CD8-positive, alpha-beta T cell (primary cell): ENCODE measurements at regions of chr19 and their contacts with region 1.

Region 1: GRCh38 chr19:54023191-54023590 is 31.8 kb downstream of the CACNG6 start:
- DNase-seq: no peak
- ATAC-seq: no peak
- H3K4me3 ChIP-seq: no peak overlapping the region
- H3K4me3 Mint-ChIP-seq: no peak overlapping the region
- H3K27ac ChIP-seq: no peak overlapping the region
- H3K27ac Mint-ChIP-seq: no peak overlapping the region
- H3K4me1 ChIP-seq: no peaks in the 10 kb centered on the region
- H3K4me1 Mint-ChIP-seq: peaks cover 4% of the 10 kb centered on the region
- H3K27me3 ChIP-seq: peaks cover 0 to 6% of the 10 kb centered on the region in 2 experiments
- H3K27me3 Mint-ChIP-seq: peaks cover 37% of the 10 kb centered on the region
- CTCF ChIP-seq: no peak

Region 2: DNA sequence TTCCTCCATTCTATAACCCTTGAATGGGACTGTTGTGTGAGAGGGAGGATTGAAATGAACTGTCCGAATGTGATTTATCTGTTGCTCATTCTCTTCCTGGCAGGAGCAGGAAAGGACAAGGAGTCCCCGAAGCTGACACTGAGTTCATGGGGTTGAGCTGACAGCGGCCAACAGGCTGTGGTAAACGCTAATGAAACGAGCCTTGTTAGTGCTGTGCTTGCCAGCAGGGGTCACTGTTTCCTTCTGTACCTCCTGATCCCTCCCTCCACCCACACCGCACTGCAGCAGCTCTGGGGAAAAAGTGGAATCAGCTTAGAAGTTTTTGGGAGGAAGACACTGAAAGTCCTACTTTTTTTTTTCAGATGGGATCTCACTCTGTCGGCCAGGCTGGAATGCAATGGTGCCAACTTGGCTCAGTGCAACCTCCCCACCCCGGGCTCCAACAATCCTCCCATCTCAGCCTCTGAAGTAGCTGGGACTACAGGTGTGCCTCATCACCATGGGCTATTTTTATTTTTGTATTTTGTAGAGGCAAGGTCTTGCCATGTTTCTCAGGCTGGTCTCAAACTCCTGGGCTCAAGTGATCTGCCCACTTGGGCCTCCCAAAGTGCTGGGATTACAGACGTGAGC is 598.1 kb before region 1 on chr19:
- CTCF ChIA-PET with region 1: no interaction called
- POLR2A ChIA-PET with region 1: no interaction called
- intact Hi-C with region 1: loop called in 1 of 2 experiments (anchors 5 kb)
- DNase-seq: peak; percentile 22 to 83 (median 70)
- ATAC-seq: peak; percentile 98
- H3K4me3 ChIP-seq: no peak overlapping the region
- H3K4me3 Mint-ChIP-seq: no peak overlapping the region
- H3K27ac ChIP-seq: no peak overlapping the region
- H3K27ac Mint-ChIP-seq: no peak overlapping the region
- H3K4me1 ChIP-seq: no peaks in the 10 kb centered on the region
- H3K4me1 Mint-ChIP-seq: peaks cover 2% of the 10 kb centered on the region
- H3K27me3 ChIP-seq: no peaks in the 10 kb centered on the region
- H3K27me3 Mint-ChIP-seq: peaks cover 2% of the 10 kb centered on the region
- CTCF ChIP-seq: peak; percentile 81

Region 3: DNA sequence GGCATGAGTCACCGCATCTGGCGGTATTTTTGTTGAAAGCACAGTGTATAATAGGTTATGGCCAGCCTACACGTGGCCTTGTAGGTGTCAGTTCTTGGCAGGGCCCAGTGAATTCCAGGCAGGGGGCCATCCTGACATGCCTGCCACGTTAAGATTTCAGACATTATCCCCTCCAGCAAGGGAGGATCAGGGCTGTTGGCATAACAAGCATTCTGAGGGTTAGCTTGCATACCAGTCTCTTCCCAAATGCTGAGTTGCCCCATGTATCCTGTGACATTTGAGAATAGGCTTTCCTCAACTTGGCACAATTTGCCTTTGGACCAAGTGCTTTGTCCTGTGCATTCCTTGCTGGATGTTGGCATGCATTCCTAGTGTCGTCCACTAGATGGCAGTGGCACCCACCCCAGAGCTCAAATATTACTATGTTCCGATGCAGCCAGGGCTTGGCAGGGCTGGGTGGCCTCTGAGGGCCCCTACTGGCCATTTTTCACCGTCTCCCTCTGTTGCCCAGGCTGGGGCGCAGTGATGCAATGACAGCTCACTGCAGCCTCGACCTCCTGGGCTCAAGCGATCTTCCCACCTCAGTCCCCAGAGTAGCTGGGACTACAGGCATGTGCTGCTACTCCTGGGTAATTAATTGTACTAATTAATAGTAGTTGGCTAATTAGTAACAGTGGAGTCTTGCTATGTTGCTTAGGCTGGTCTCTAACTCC is 230.3 kb before region 1 on chr19:
- CTCF ChIA-PET with region 1: interaction called, 32 read pairs
- POLR2A ChIA-PET with region 1: no interaction called
- intact Hi-C with region 1: loop called (anchors 1 kb)
- DNase-seq: peak; percentile 46 to 81 (median 68)
- ATAC-seq: peak; percentile 100
- H3K4me3 ChIP-seq: no peak overlapping the region
- H3K4me3 Mint-ChIP-seq: no peak overlapping the region
- H3K27ac ChIP-seq: no peak overlapping the region
- H3K27ac Mint-ChIP-seq: no peak overlapping the region
- H3K4me1 ChIP-seq: no peaks in the 10 kb centered on the region
- H3K4me1 Mint-ChIP-seq: no peaks in the 10 kb centered on the region
- H3K27me3 ChIP-seq: no peaks in the 10 kb centered on the region
- H3K27me3 Mint-ChIP-seq: peaks cover 2% of the 10 kb centered on the region
- CTCF ChIP-seq: peak; percentile 91

Region 4: DNA sequence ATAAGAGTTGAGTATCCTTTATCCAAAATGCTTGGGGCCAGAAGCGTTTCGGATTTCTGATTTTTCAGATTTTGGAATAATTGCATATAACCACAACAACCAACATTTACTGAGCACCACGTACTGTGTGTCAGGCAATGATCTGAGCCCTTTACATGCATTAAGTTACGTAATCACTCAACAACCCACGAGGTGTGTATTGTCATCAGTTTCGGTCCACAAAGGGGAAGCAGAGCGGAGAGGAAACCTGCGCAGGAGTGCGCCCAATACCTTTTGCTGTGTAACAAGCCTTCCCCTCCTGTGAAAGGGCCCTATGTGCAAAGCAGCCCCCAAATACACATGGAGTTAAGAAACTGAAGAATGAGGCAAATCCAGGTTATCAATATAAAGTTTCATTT is 178.3 kb before region 1 on chr19:
- CTCF ChIA-PET with region 1: interaction called, 57 read pairs
- POLR2A ChIA-PET with region 1: no interaction called
- intact Hi-C with region 1: loop called (anchors 1 kb)
- DNase-seq: peak in 1 of 9 experiments; percentile 32
- ATAC-seq: no peak
- H3K4me3 ChIP-seq: no peak overlapping the region
- H3K4me3 Mint-ChIP-seq: no peak overlapping the region
- H3K27ac ChIP-seq: no peak overlapping the region
- H3K27ac Mint-ChIP-seq: no peak overlapping the region
- H3K4me1 ChIP-seq: no peaks in the 10 kb centered on the region
- H3K4me1 Mint-ChIP-seq: peaks cover 5% of the 10 kb centered on the region
- H3K27me3 ChIP-seq: peaks cover 0 to under 1% of the 10 kb centered on the region in 2 experiments
- H3K27me3 Mint-ChIP-seq: peaks cover 21% of the 10 kb centered on the region
- CTCF ChIP-seq: no peak

Region 5: GRCh38 chr19:53853707-53854106 is 169.5 kb before region 1 on chr19:
- CTCF ChIA-PET with region 1: interaction called, 39 read pairs
- POLR2A ChIA-PET with region 1: no interaction called
- intact Hi-C with region 1: no loop called
- DNase-seq: no peak
- ATAC-seq: no peak
- H3K4me3 ChIP-seq: no peak overlapping the region
- H3K4me3 Mint-ChIP-seq: no peak overlapping the region
- H3K27ac ChIP-seq: no peak overlapping the region
- H3K27ac Mint-ChIP-seq: no peak overlapping the region
- H3K4me1 ChIP-seq: no peaks in the 10 kb centered on the region
- H3K4me1 Mint-ChIP-seq: peaks cover 6% of the 10 kb centered on the region
- H3K27me3 ChIP-seq: peaks cover 0 to 3% of the 10 kb centered on the region in 2 experiments
- H3K27me3 Mint-ChIP-seq: peaks cover 22% of the 10 kb centered on the region
- CTCF ChIP-seq: no peak

Region 6: DNA sequence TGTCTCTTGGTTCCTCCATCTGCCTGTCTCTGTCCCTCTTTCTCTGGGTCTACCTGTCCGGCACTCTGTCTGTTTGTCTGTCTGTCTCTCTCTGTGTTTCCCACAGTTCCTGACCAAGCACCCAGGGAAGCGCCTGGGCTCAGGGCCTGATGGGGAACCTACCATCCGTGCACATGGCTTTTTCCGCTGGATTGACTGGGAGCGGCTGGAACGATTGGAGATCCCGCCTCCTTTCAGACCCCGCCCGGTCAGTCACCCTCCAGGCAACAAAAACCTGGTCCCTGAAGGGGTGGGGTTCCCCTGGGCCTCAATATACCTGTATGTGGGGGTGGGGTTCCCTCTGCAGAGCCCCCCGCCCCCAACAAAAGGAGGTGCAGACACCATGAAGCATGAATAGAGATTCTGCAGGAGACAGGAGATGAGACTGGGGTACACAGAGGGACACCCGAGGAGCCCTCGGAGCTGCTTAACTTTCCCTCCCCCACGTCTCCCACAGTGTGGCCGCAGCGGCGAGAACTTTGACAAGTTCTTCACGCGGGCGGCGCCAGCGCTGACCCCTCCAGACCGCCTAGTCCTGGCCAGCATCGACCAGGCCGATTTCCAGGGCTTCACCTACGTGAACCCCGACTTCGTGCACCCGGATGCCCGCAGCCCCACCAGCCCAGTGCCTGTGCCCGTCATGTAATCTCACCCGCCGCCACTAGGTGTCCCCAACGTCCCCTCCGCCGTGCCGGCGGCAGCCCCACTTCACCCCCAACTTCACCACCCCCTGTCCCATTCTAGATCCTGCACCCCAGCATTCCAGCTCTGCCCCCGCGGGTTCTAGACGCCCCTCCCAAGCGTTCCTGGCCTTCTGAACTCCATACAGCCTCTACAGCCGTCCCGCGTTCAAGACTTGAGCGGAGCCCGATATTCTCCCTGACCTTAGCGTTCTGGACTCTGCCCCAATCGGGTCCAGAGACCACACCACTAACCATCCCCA is 116.7 kb before region 1 on chr19:
- CTCF ChIA-PET with region 1: no interaction called
- POLR2A ChIA-PET with region 1: interaction called, 3 read pairs
- intact Hi-C with region 1: loop called in 1 of 2 experiments (anchors 2 kb)
- DNase-seq: peak; percentile 52 to 81 (median 73)
- ATAC-seq: peak; percentile 81
- H3K4me3 ChIP-seq: no peak overlapping the region
- H3K4me3 Mint-ChIP-seq: peak overlapping the region; percentile 29
- H3K27ac ChIP-seq: no peak overlapping the region
- H3K27ac Mint-ChIP-seq: no peak overlapping the region
- H3K4me1 ChIP-seq: peaks cover 25% of the 10 kb centered on the region
- H3K4me1 Mint-ChIP-seq: peaks cover 24% of the 10 kb centered on the region
- H3K27me3 ChIP-seq: peaks cover 39 to 42% of the 10 kb centered on the region in 2 experiments
- H3K27me3 Mint-ChIP-seq: peaks cover 73% of the 10 kb centered on the region
- CTCF ChIP-seq: peak; percentile 80

Region 7: DNA sequence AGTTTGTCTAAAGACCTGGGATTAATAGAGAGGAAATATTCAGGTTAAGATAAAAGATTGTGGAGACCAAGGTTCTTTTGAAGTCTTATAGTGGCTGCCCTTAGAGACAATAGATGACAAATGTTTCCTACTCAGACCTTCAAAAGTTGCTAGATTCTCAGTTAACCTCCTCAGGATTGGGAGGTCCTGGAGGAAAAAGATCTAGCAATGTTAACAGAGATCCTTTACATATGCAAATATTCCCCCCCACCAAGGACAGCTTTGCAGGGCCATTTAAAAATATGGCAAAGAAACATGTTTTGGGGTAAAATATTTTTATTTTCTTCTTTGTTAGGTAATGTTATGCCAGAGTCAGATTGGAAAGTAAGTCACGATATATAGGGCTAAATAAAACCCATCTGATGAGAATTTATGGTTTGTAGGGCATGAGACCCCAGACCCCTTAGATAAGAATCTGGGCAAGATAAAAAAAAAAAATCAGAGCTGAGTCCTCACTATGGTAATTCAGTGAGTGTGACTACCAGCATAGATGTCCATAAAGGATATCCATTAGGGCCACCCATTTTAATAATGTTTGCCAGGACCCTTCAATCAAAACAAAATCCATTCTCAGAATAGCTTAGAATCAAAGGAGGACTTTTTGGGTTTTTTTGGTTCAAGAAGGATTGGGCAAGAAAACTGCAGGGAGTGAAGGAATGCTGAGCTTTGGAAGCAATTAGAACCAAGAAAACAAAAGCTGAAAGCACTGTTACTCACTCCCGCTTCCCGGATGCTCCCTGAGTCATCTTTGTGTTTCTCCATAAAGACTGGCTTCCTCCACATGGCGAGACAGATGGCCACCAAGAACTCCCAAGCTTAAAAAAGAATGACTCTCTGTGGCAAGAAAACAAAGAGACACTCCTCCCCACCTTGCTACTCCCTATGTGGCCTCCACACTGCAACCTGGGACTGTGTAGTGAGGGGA is 12.3 kb after region 1 on chr19:
- CTCF ChIA-PET with region 1: interaction called, 12 read pairs
- POLR2A ChIA-PET with region 1: no interaction called
- intact Hi-C with region 1: no loop called
- DNase-seq: no peak
- ATAC-seq: no peak
- H3K4me3 ChIP-seq: no peak overlapping the region
- H3K4me3 Mint-ChIP-seq: no peak overlapping the region
- H3K27ac ChIP-seq: no peak overlapping the region
- H3K27ac Mint-ChIP-seq: no peak overlapping the region
- H3K4me1 ChIP-seq: no peaks in the 10 kb centered on the region
- H3K4me1 Mint-ChIP-seq: no peaks in the 10 kb centered on the region
- H3K27me3 ChIP-seq: no peaks in the 10 kb centered on the region
- H3K27me3 Mint-ChIP-seq: peaks cover 18% of the 10 kb centered on the region
- CTCF ChIP-seq: no peak

Region 8: GRCh38 chr19:54707962-54708361 is 684.8 kb after region 1 on chr19:
- CTCF ChIA-PET with region 1: no interaction called
- POLR2A ChIA-PET with region 1: no interaction called
- intact Hi-C with region 1: no loop called
- DNase-seq: peak in 3 of 9 experiments; percentile 23 to 51 (median 39)
- ATAC-seq: no peak
- H3K4me3 ChIP-seq: no peak overlapping the region
- H3K4me3 Mint-ChIP-seq: no peak overlapping the region
- H3K27ac ChIP-seq: no peak overlapping the region
- H3K27ac Mint-ChIP-seq: no peak overlapping the region
- H3K4me1 ChIP-seq: peaks cover 8% of the 10 kb centered on the region
- H3K4me1 Mint-ChIP-seq: peaks cover 11% of the 10 kb centered on the region
- H3K27me3 ChIP-seq: peaks cover 0 to 2% of the 10 kb centered on the region in 2 experiments
- H3K27me3 Mint-ChIP-seq: peaks cover 8% of the 10 kb centered on the region
- CTCF ChIP-seq: no peak